Activated T-helper 2 cell treated with anti-CD3 and anti-CD28 coated beads, Interferon-gamma antibody, Interleukin-2, Interleukin-4, amounts not matched to agents 10 μg/mL and 5 μg/mL and 100 μg/mL, durations not matched to agents 14 hours and 24 hours and 36 hours (primary cell): ENCODE measurements at regions of chr18 and their contacts with region 1.

Region 1: GRCh38 chr18:26215247-26215970 is 10.8 kb upstream of the TAF4B start:
- DNase-seq: peak; percentile 44
- H3K4me3 Mint-ChIP-seq: peak overlapping the region; percentile 80
- H3K27ac Mint-ChIP-seq: peak overlapping the region; percentile 95
- H3K4me1 Mint-ChIP-seq: peaks cover 15% of the 10 kb centered on the region
- H3K27me3 Mint-ChIP-seq: no peaks in the 10 kb centered on the region

Region 2: DNA sequence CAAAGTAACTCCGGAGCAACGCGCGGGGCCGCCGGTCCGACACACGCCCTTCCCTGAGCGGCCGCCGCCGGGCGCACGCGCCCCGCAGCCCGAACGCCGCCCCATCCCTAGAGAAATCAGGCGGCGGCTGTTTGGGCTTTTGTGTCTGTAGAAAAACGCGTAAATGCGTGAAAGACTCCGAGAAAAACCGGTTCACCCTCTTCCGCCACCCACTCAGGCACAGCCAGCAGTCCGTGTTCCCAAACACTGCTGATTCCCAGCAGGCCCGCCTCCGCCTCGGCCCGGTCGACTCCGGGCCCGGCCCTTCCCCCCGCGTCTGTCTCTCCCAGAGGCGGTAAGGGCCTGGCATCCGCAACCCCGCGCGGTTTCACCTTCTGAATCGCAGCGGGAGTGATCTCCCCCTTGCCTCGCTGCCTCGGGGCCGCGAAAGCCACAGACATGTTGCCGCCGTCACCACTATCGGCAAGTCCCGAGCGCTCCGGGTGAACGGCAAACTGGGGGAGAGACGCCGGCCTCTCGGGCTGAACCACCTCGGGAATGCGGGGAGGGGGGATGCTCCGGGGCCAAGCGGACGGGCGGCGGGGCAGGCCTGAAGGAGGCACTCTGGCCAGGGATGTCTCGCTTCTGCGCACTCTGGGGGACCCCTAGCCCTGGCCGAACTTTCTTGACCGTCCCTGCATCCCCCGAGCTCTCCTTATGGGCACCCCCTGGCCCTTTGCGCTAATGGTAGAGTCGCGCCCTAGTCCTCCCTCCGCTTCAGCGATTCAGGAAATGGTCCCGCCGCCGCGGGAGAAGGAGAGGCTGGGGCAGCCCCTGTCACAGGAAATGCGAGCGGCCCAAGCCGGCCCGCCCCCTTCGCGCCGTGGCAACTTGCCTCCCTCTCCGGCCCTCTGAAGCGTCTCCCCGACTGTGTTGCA is 125.0 kb before region 1 on chr18 and contains the start of gene SS18:
- intact Hi-C with region 1: loop called (anchors 2 kb)
- DNase-seq: peak; percentile 88
- H3K4me3 Mint-ChIP-seq: peak within 1 kb of the TSS; percentile 89
- H3K27ac Mint-ChIP-seq: peak within 1 kb of the TSS; percentile 97
- H3K4me1 Mint-ChIP-seq: peaks cover 26% of the 10 kb centered on the region
- H3K27me3 Mint-ChIP-seq: peaks cover 2% of the 10 kb centered on the region
- total RNA-seq, gene SS18: 75.2 TPM in 2 replicates

Region 3: DNA sequence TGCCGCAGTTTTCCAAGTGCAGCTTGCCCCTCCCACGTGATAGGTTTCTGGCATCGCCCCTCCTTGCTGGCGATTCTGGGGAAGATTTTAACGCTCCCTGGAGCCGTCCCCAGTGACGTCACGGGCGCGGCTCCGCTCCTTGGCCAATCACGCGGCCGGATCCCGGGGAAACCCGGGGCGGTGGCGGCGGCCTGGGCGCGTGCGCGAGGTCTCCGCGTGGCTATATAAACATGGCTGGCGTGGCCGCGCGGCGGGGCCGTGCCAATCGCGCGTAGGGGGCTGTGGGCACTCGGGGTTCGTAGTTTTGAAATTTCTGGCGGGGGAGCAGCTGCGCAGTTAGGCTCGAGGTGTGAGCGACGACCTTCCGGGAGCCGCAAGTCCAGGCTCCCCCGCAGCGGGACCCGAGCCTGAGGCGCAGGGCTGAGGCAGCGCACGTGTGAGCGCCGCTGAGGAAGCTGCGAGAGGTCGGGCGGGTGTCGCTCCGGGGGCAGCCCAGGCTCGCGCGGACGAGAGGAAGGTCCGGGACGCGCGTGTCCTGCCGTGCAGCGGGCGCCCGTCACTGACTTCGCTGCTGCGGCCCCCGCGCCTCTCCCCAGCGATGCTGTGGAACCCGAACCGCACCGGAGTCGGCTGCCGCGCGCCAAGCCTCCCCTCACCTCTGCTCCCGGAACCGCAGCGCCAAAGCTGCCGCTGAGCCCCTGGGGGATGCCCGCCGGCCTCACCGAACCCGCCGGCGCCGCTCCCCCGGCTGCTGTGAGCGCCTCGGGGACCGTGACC is 11.0 kb after region 1 on chr18 and contains the start of gene TAF4B:
- intact Hi-C with region 1: loop called (anchors 1 kb)
- DNase-seq: peak; percentile 91
- H3K4me3 Mint-ChIP-seq: peak within 1 kb of the TSS; percentile 94
- H3K27ac Mint-ChIP-seq: peak within 1 kb of the TSS; percentile 95
- H3K4me1 Mint-ChIP-seq: peaks cover 25% of the 10 kb centered on the region
- H3K27me3 Mint-ChIP-seq: peaks cover 7% of the 10 kb centered on the region
- total RNA-seq, gene TAF4B: 14.9 and 16.1 TPM in 2 replicates

Region 4: GRCh38 chr18:26405190-26405801 is 189.9 kb after region 1 on chr18:
- intact Hi-C with region 1: no loop called
- DNase-seq: no peak
- H3K4me3 Mint-ChIP-seq: no peak overlapping the region
- H3K27ac Mint-ChIP-seq: no peak overlapping the region
- H3K4me1 Mint-ChIP-seq: no peaks in the 10 kb centered on the region
- H3K27me3 Mint-ChIP-seq: no peaks in the 10 kb centered on the region

Region 5: DNA sequence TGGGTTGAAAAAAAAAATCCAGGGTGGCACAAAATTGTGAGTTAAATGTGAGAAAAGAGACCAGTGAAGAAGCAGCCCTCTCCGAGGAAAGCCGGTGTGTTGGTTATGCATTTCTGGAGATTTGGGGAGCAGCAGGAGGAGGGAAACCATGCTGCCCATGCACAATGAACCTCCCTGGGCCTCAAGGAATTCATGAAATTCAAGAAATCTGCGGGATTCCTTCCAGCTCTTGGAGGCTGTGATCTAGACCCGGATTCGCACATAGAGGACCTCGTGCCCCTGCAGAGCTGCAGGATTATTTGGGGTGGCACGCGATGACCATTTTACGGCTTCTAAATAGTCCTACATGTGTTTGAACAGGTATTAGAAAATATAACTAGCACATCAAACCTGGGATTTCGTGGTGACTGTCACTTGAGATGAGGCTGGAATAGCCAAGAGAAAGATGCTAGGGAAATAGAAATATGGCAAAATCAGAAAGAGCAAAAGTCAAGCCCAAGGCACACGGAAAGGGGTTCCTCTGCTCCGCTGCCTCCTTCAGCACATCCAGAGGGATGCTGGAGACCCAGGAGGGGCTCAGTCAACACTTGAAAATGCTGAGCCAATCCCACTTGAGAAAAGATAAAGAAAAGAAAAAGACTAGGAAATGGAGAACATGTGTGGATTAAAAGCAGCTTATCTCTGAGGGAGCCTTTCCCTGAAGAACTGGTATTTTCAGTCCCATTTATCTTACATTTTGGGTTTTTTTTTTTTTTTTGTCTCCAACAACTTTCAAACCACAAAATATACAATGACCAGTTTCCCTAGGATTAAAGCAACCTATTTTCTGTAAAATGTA is 310.9 kb after region 1 on chr18:
- intact Hi-C with region 1: no loop called
- DNase-seq: no peak
- H3K4me3 Mint-ChIP-seq: no peak overlapping the region
- H3K27ac Mint-ChIP-seq: no peak overlapping the region
- H3K4me1 Mint-ChIP-seq: no peaks in the 10 kb centered on the region
- H3K27me3 Mint-ChIP-seq: no peaks in the 10 kb centered on the region